AG04450 (cell line): ENCODE measurements at regions of chr12 and their contacts with region 1.

Region 1: GRCh38 chr12:95304673-95305198 is 87.1 kb downstream of the VEZT start:
- DNase-seq: no peak
- H3K4me3 ChIP-seq: no peak overlapping the region
- H3K27ac ChIP-seq: no peak overlapping the region
- H3K27me3 ChIP-seq: no peaks in the 10 kb centered on the region
- CTCF ChIP-seq: no peak

Region 2: DNA sequence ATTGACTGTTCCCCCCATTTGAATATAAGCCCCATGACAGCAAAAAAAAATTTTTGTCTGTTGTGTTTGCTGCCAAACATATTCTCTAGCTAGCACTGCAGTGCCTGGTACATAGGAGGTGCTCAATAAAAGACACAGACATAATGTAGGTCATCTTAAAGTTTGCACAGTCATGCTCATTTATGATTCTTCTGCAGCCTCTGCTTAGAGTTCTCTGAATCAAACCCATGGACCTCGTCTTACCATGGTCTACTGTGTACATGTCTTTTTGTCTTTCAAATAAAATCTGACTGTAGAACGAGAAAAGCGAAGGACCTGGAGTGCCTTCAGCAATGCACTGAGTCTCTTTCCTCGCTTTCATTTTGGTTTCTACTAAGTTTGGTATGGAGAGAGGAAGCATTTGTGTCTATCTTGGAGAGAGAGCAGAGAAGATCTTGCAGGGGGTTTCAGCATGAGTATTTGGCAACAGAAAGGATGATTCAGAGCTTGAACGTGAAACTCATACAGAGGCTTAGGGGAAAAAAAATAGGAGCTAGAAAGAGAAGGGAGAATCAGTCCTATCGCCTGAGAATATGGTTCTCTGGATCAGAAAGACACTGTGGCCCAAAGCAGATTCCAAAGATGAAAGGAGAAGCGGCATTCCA is 615.6 kb before region 1 on chr12:
- CTCF ChIA-PET with region 1: no interaction called
- POLR2A ChIA-PET with region 1: no interaction called
- DNase-seq: no peak
- H3K4me3 ChIP-seq: no peak overlapping the region
- H3K27ac ChIP-seq: no peak overlapping the region
- H3K27me3 ChIP-seq: peaks cover 21% of the 10 kb centered on the region
- CTCF ChIP-seq: no peak

Region 3: DNA sequence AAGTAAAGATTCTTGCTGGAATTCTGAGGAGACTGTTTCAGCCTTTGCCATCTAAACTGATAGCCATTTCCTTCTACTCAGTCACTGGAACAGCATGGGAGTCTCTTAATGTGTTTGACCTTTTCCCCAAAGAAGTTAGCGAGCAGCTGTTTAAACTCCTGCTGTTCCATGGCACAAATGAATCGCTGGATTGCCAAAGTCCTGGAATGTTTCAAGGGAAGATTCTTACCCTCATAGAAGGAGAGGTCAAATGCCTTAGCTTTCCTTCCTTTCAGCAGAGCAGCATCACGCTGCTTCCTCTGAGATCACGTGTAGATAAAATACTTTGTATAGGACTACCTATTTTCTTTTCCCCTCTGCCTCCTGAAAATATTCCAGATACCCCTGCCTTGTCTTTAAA is 220.8 kb before region 1 on chr12:
- CTCF ChIA-PET with region 1: no interaction called
- POLR2A ChIA-PET with region 1: no interaction called
- DNase-seq: peak; percentile 66
- H3K4me3 ChIP-seq: no peak overlapping the region
- H3K27ac ChIP-seq: no peak overlapping the region
- H3K27me3 ChIP-seq: no peaks in the 10 kb centered on the region
- CTCF ChIP-seq: no peak

Region 4: DNA sequence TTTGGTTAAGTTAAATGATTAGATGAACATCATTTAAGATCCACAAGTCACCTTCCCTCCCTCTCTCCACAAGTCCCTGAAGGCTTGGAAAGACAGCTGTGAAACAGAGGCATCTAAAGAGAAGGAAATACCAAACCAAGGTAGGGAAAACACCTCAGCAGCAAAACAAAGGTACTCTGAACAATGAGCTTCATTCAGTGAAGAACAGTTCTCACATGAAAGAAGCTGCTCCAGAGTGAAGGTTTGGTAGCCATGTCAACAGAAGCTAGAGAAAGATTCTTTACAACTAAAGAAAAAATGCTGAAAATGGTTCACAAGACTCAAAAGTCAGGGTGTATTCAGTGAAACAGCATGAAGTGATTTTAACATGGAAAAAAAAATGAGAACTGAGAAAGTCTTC is 156.9 kb before region 1 on chr12:
- CTCF ChIA-PET with region 1: interaction called, 15 read pairs
- POLR2A ChIA-PET with region 1: no interaction called
- DNase-seq: no peak
- H3K4me3 ChIP-seq: no peak overlapping the region
- H3K27ac ChIP-seq: no peak overlapping the region
- H3K27me3 ChIP-seq: no peaks in the 10 kb centered on the region
- CTCF ChIP-seq: no peak

Region 5: GRCh38 chr12:95505039-95505438 is 200.3 kb after region 1 on chr12:
- CTCF ChIA-PET with region 1: no interaction called
- POLR2A ChIA-PET with region 1: no interaction called
- DNase-seq: no peak
- H3K4me3 ChIP-seq: no peak overlapping the region
- H3K27ac ChIP-seq: no peak overlapping the region
- H3K27me3 ChIP-seq: no peaks in the 10 kb centered on the region
- CTCF ChIP-seq: no peak